ENCODE measurements at regions of chr3 and their contacts with region 1.

Region 1: DNA sequence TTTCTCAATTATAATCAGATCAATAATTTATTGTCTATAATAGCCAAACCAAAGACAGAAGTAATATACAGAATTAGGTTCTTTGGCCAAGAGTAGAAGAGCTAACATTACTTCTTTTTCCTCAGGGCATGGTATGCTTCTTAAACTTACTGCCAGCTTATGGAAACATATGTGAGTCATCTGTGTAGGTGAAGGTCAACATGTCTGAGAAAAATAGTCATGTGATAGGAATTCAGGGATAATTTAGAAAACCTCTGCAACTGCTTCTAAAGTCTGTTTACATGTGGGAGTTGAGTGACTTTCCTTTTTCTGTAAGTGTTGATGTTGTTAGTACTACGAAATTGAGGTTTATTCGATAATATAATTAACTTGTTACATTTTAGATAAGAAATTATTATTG is 19.2 kb upstream of the MAP6D1 start:
- DNase-seq: no peak
- H3K4me3 ChIP-seq: no peak overlapping the region
- H3K27ac ChIP-seq: no peak overlapping the region
- H3K4me1 ChIP-seq: peaks cover 0 to 6% (median 1%) of the 10 kb centered on the region in 4 experiments
- H3K27me3 ChIP-seq: no peaks in the 10 kb centered on the region

Region 2: DNA sequence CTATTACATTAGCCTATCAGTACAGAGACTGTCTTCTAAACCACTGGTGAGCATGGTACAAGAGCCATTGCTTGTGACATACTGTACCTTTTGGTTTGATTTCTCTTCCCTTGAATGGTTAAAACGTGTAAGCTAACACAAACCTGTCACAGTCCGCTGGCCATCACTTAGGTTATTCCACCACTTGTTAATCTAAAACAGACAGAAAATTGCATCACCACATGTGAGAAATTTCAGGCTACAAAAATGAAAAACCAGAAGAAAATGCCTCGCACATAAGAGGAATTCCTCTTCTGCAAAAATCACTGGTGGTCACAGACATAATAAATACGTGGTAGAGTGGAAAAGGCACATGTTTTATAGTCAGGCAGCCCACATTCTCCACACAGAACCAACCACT is 18.0 kb after region 1 on chr3:
- CTCF ChIA-PET with region 1: interaction called, 12 read pairs
- POLR2A ChIA-PET with region 1: no interaction called
- DNase-seq: no peak
- H3K4me3 ChIP-seq: no peak overlapping the region
- H3K27ac ChIP-seq: no peak overlapping the region
- H3K4me1 ChIP-seq: no peaks in the 10 kb centered on the region
- H3K27me3 ChIP-seq: no peaks in the 10 kb centered on the region